Cardiac septum (tissue), 1 donor: ENCODE measurements at regions of chr7 and their contacts with region 1.

Region 1: DNA sequence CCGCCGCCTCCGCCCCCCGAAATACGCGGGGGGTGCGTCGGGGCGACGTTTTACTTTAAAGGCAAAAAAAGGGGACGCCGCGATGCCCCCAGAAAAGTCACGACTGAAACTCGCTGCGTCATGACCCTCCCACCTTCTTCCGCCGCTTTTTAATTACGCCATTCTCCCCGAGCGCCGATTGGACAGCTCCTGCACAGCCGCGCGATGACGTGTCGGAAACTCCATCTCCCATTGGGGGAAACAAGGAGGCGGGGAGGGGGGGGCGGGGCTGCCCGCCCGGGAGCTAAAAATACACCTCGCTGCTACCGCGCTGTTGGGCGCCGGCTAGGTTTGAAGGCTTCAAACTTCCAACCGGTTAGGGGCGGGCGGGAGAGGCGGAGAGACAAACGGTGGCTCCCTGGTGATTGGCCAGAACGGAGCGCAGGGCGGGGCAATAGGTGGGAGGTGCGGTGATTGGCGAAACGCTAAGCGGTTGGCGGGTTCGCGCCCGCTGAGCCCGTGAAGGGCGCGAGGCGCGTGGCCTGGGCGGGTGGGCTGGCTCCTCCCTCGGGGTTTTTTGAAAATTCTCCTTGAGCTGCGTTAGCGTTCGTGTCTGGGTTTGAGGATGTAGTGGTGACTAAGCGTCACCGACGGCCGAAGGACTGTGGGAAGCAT is at the start of gene RHEB:
- DNase-seq: peak; percentile 99
- total RNA-seq, gene RHEB: 113 TPM

Region 2: DNA sequence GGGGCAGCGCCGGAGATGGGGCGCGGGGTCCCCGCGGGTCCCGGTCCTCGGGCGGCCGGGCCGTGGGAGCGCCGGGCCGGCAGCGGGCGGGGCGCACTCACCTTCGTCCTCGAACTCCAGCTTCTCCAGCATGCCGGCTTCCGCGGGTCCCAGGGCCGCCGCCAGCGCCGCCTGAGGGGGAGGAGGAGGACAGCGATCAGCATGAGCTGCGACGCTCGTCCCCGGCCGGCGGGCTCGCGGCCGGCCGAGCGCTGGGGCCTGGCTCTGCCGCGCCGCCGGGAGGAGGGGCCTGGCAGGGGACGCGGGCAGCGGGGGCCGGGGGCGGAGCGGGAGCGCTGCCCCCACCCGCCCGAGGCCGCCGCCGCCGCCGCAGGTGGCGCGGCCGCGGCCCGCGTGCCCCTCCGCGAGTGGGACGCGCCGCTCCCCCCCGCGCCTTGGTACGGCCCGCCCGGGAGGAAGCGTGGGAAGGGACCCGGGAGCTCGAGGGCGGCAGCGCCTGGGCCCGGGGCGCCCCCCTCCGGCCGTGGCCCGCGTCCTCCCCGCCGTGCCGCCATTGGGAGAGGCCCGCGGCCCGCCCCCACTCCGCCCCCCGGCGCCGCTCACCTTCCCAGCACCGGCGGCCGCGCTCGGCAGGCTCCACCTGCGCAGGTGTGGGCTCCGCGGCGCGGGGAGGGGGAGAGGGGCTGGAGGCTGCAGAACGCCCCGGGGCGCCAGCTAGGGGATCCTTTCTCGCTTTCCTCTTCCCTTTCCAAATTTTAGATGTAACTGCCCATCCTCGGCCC is 112.3 kb after region 1 on chr7:
- intact Hi-C with region 1: loop called (anchors 2 kb)
- DNase-seq: peak; percentile 95

Region 3: DNA sequence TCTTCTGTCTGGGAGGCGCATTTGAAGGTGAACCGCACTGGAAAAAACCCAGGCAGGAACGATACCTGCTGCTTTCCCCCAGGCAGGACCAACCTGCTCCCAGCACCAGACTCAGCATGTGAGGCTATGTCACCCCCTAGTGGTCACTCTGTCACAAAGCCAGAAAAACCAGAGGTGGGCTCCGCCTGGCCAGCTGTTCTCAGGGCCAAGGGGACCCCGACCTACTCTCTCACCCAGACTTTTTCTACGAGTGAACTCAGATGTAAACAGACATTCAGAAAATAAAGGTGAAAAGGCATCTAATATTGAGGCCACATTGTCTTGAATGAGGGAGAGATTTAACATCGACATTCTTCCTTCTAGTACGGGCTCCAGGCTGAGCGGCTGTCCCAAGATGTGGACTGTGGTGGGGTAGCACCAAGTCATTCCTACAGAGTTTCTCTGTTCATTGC is 239.7 kb after region 1 on chr7:
- intact Hi-C with region 1: loop called (anchors 5 kb)
- DNase-seq: peak; percentile 84